CD4-positive, alpha-beta memory T cell (primary cell): ENCODE measurements at regions of chr12 and their contacts with region 1.

Region 1: GRCh38 chr12:132828706-132829534 is at the start of gene GOLGA3:
- DNase-seq: peak; percentile 93 to 96 (median 95)
- H3K4me3 ChIP-seq: peak within 1 kb of the TSS; percentile 58 to 91
- H3K4me3 Mint-ChIP-seq: peak within 1 kb of the TSS; percentile 91 to 99 (median 96)
- H3K27ac ChIP-seq: peak within 1 kb of the TSS; percentile 98
- H3K27ac Mint-ChIP-seq: peak within 1 kb of the TSS; percentile 99 to 100 (median 100)
- H3K4me1 ChIP-seq: peaks cover 30% of the 10 kb centered on the region
- H3K4me1 Mint-ChIP-seq: peaks cover 22 to 63% (median 43%) of the 10 kb centered on the region in 4 donors
- H3K27me3 ChIP-seq: no peaks in the 10 kb centered on the region
- H3K27me3 Mint-ChIP-seq: no peaks in the 10 kb centered on the region
- total RNA-seq, gene GOLGA3: 64.1 to 67.6 TPM

Region 2: GRCh38 chr12:132687208-132688164 is 141.4 kb before region 1 on chr12 and contains the starts of genes POLE and PXMP2:
- CTCF ChIA-PET with region 1: no interaction called
- POLR2A ChIA-PET with region 1: no interaction called
- intact Hi-C with region 1: loop called (anchors 5 kb)
- DNase-seq: peak; percentile 91 to 93 (median 91)
- H3K4me3 ChIP-seq: peak within 1 kb of the TSS in 1 of 2 donors; percentile 45
- H3K4me3 Mint-ChIP-seq: peak within 1 kb of the TSS; percentile 78 to 90 (median 86)
- H3K27ac ChIP-seq: peak within 1 kb of the TSS; percentile 26
- H3K27ac Mint-ChIP-seq: peak within 1 kb of the TSS in 4 of 7 donors; percentile 47 to 74 (median 62)
- H3K4me1 ChIP-seq: peaks cover 13% of the 10 kb centered on the region
- H3K4me1 Mint-ChIP-seq: peaks cover 15 to 36% (median 20%) of the 10 kb centered on the region in 4 donors
- H3K27me3 ChIP-seq: no peaks in the 10 kb centered on the region
- H3K27me3 Mint-ChIP-seq: no peaks in the 10 kb centered on the region
- total RNA-seq, gene POLE: 69.5 to 75.4 TPM
- total RNA-seq, gene PXMP2: 4.2 to 7.2 TPM

Region 3: DNA sequence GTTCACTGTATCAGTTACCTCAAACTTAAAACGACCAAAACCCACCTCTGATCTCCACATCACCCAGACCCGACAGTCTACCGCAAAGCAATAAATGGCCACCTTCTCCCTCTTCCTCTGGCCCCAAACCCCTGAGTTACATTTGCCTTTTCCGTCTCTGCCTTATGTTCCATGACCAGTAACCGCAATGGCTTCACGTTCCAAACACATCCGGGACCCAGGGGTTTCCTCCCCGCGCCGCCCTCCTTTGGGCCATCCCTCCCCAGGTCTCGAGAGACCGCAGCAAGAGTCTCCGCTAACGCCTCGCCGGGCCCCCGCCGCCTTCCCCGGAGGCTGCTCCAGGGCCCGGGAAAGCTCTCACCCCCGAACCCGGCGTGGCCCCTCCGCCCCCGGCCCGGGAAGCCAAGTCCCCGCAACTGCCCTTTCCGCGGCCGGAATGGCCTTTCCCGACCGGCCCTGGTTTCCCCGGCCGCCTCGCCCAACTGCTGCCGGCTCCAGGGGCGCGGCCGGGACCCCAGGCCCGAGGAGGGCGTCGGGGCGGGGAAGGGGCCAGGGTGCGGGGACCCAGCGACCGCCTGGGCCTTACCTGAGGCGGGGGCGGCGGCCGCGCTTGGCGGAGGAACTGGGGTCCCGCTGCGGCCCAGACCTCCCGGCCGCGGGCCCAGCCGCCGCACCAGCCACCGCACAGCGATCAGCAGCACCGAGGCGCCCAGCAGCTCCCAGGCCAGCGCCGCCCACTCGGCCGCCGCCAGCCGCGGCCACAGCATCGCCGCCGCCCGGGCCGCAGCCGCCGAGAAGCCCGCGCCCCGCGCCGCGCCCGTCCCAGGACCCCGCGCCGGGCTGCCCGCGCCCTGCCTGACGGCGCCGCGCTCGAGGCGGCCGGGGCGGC is 67.6 kb before region 1 on chr12 and contains the start of gene ANKLE2:
- CTCF ChIA-PET with region 1: no interaction called
- POLR2A ChIA-PET with region 1: interaction called, 9 read pairs
- intact Hi-C with region 1: loop called (anchors 5 kb)
- DNase-seq: peak; percentile 68 to 86 (median 70)
- H3K4me3 ChIP-seq: peak within 1 kb of the TSS; percentile 75 to 81
- H3K4me3 Mint-ChIP-seq: peak within 1 kb of the TSS; percentile 82 to 99 (median 93)
- H3K27ac ChIP-seq: peak within 1 kb of the TSS; percentile 89
- H3K27ac Mint-ChIP-seq: peak within 1 kb of the TSS; percentile 95 to 99 (median 97)
- H3K4me1 ChIP-seq: peaks cover 24% of the 10 kb centered on the region
- H3K4me1 Mint-ChIP-seq: peaks cover 14 to 27% (median 22%) of the 10 kb centered on the region in 4 donors
- H3K27me3 ChIP-seq: no peaks in the 10 kb centered on the region
- H3K27me3 Mint-ChIP-seq: no peaks in the 10 kb centered on the region
- total RNA-seq, gene ANKLE2: 95.6 to 101 TPM

Region 4: DNA sequence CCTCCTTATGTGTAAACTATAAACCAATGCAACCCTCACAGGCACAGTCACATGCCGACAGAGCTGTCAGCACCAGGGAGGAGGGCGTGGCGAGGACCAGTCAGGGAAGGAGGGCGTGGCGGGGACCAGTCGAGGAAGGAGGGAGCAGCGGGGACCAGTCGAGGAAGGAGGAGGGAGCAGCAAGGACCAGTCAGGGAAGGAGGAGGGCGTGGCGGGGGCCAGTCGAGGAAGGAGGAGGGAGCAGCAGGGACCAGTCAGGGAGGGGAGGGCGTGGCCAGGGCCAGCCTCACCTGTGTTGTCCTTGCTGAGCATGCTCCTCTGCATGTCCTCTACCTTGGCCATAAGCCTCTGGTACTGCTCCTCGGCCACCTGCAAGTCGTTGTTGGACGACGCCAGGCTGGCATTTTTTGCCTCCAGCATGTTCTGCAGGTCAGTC is 24.5 kb before region 1 on chr12:
- CTCF ChIA-PET with region 1: no interaction called
- POLR2A ChIA-PET with region 1: no interaction called
- intact Hi-C with region 1: no loop called
- DNase-seq: no peak
- H3K4me3 ChIP-seq: no peak overlapping the region
- H3K4me3 Mint-ChIP-seq: no peak overlapping the region
- H3K27ac ChIP-seq: no peak overlapping the region
- H3K27ac Mint-ChIP-seq: no peak overlapping the region
- H3K4me1 ChIP-seq: no peaks in the 10 kb centered on the region
- H3K4me1 Mint-ChIP-seq: peaks cover 0 to 15% (median 7%) of the 10 kb centered on the region in 4 donors
- H3K27me3 ChIP-seq: no peaks in the 10 kb centered on the region
- H3K27me3 Mint-ChIP-seq: no peaks in the 10 kb centered on the region

Region 5: GRCh38 chr12:132956011-132956788 is 127.3 kb after region 1 on chr12 and contains the start of gene ZNF605:
- CTCF ChIA-PET with region 1: no interaction called
- POLR2A ChIA-PET with region 1: interaction called, 3 read pairs
- intact Hi-C with region 1: loop called (anchors 2 kb)
- DNase-seq: peak; percentile 82 to 92 (median 86)
- H3K4me3 ChIP-seq: peak within 1 kb of the TSS; percentile 53 to 97
- H3K4me3 Mint-ChIP-seq: peak within 1 kb of the TSS; percentile 93 to 98 (median 94)
- H3K27ac ChIP-seq: peak within 1 kb of the TSS; percentile 81
- H3K27ac Mint-ChIP-seq: peak within 1 kb of the TSS; percentile 83 to 97 (median 94)
- H3K4me1 ChIP-seq: peaks cover 13% of the 10 kb centered on the region
- H3K4me1 Mint-ChIP-seq: peaks cover 20 to 40% (median 29%) of the 10 kb centered on the region in 4 donors
- H3K27me3 ChIP-seq: no peaks in the 10 kb centered on the region
- H3K27me3 Mint-ChIP-seq: no peaks in the 10 kb centered on the region
- total RNA-seq, gene ZNF605: 16.5 to 17.2 TPM

Region 6: GRCh38 chr12:133037207-133038005 is 208.5 kb after region 1 on chr12 and contains the start of gene ZNF84:
- CTCF ChIA-PET with region 1: no interaction called
- POLR2A ChIA-PET with region 1: no interaction called
- intact Hi-C with region 1: loop called (anchors 5 kb)
- DNase-seq: peak; percentile 96 to 99 (median 98)
- H3K4me3 ChIP-seq: peak within 1 kb of the TSS in 1 of 2 donors; percentile 54
- H3K4me3 Mint-ChIP-seq: peak within 1 kb of the TSS; percentile 85 to 98 (median 94)
- H3K27ac ChIP-seq: peak within 1 kb of the TSS; percentile 77
- H3K27ac Mint-ChIP-seq: peak within 1 kb of the TSS; percentile 91 to 98 (median 96)
- H3K4me1 ChIP-seq: peaks cover 12% of the 10 kb centered on the region
- H3K4me1 Mint-ChIP-seq: peaks cover 3 to 14% (median 7%) of the 10 kb centered on the region in 4 donors
- H3K27me3 ChIP-seq: no peaks in the 10 kb centered on the region
- H3K27me3 Mint-ChIP-seq: no peaks in the 10 kb centered on the region
- total RNA-seq, gene ZNF84: 42.0 to 46.2 TPM